ENCODE measurements at regions of chr11 and their contacts with region 1.

Region 1: DNA sequence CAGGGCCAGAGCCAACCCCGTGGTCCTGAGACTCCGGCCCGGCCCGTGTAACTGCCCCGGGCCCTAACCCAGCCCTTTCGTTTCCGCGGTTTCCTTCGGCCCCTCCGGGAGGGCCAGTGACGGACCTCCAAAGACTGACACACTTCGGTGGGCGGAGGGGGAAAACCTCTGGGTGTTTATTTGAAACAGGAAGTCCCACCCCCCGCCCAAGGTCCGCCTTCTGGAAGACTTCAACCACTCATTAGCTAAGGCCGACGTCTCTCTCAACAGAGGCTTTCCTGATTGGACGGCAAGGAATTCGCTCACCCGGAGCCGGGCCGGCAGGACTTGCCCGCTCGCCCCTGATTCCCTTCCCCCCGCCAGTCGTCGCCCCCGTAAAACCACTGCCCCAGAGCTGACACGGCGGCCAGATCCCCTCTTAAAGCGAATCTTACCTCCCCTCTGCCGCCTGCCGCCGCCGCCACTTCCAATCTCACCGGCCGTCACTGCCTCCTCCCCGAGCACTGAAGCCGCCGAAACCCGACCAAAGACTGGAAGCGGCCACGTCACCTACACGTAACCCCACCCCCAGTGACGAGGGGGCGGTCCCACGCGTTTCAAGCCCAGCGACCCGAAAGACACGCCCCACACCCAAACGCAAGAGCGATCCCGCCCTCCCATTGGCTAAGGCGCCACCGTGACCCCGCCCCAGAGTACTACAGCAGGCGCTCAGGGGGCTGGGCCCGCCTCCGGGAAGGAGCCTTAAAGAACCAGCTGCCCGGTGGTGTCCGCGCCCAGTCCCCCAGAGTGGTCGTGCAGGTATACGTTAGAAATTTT is at the start of gene STX5:
- DNase-seq: peak; percentile 91
- ATAC-seq: peak; percentile 94
- H3K4me3 ChIP-seq: peak within 1 kb of the TSS; percentile 89 to 95
- H3K27ac ChIP-seq: peak within 1 kb of the TSS; percentile 91
- H3K4me1 ChIP-seq: peaks cover 18% of the 10 kb centered on the region
- H3K27me3 ChIP-seq: no peaks in the 10 kb centered on the region
- CTCF ChIP-seq: no peak
- total RNA-seq, gene STX5: 31.4 TPM

Region 2: DNA sequence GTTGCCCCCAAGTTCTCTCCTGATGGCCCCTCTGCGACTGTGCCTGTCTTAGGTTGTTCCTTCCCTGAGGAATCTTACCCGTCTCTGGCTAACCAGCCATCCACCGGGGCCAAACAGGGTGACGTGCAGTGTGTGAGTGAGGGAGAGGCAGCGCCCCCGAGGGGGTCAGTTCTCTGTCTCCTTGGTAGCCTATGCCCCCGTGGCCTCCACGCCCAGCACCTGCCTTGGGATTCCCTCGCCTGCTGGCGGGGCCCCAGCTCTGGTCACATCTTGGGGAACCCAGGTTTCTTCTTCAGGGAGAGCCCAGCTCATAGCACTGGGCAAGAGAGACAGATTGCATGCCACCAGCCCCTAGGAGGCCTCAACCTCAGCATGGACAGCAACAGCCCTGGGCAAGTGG is 32.2 kb before region 1 on chr11:
- CTCF ChIA-PET with region 1: no interaction called
- POLR2A ChIA-PET with region 1: no interaction called
- in situ Hi-C with region 1: no loop called
- intact Hi-C with region 1: no loop called
- DNase-seq: no peak
- ATAC-seq: no peak
- H3K4me3 ChIP-seq: no peak overlapping the region
- H3K27ac ChIP-seq: no peak overlapping the region
- H3K4me1 ChIP-seq: peaks cover 5% of the 10 kb centered on the region
- H3K27me3 ChIP-seq: no peaks in the 10 kb centered on the region
- CTCF ChIP-seq: no peak

Region 3: DNA sequence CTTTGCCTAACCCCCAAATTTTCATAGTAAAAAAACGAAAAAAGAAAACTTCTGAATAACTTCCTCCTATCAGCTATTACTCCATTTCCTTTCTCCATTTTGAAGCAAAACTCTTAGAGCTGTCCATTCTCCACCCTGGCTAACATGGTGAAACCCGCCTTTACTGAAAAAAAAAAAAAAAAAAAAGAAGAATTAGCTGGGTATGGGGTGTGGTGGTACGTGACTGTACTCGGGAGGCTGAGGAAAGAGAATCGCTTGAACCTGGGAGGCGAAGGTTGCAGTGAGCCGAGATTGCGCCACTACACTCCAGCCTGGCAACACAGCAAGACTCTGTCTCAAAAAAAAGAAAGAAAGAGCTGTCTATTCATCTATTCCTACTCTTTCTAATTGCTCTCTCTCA is 15.2 kb before region 1 on chr11:
- CTCF ChIA-PET with region 1: no interaction called
- POLR2A ChIA-PET with region 1: interaction called, 11 read pairs
- in situ Hi-C with region 1: no loop called
- intact Hi-C with region 1: no loop called
- DNase-seq: no peak
- ATAC-seq: no peak
- H3K4me3 ChIP-seq: no peak overlapping the region
- H3K27ac ChIP-seq: no peak overlapping the region
- H3K4me1 ChIP-seq: no peaks in the 10 kb centered on the region
- H3K27me3 ChIP-seq: no peaks in the 10 kb centered on the region
- CTCF ChIP-seq: no peak

Region 4: GRCh38 chr11:62855571-62856332 is 24.0 kb after region 1 on chr11:
- CTCF ChIA-PET with region 1: no interaction called
- POLR2A ChIA-PET with region 1: interaction called, 23 read pairs
- in situ Hi-C with region 1: no loop called
- intact Hi-C with region 1: no loop called
- DNase-seq: peak; percentile 92
- ATAC-seq: peak; percentile 93
- H3K4me3 ChIP-seq: peak overlapping the region; percentile 71 to 99
- H3K27ac ChIP-seq: peak overlapping the region; percentile 99
- H3K4me1 ChIP-seq: peaks cover 40% of the 10 kb centered on the region
- H3K27me3 ChIP-seq: no peaks in the 10 kb centered on the region
- CTCF ChIP-seq: no peak

Region 5: DNA sequence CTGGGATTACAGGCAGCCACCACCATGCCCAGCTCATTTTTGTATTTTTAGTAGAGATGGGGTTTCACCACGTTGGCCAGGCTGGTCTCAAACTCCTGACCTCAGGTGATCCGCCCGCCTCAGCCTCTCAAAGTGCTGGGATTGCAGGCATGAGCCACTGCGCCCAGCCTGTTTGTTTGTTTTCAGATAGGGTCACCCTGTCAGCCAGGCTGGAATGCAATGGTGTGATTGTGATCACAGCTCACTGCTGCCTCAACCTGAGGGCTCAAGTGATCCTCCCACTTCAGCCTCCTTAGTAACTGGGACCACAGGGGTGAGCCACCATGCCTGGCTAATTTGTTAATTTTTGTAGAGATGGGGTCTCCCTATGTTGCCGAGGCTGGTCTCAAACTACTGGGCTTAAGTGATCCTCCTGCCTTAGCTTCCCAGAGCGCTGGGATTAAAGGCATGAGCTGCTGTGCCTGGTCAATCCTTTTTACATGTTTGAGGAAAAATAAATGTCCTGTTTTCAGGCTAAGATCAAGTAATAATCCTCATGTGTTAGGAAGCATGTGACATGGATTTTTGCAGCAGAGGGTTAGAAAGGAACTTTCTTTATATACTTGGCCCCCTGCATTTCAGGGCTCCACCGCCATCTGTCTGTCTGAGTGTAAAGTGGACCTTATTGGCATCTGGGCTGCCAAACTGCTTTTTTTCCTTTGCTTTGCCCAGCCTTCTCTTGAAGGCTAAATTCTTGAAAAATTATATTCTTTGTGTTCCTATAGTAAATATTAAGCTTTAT is 44.2 kb after region 1 on chr11:
- CTCF ChIA-PET with region 1: no interaction called
- POLR2A ChIA-PET with region 1: interaction called, 11 read pairs
- in situ Hi-C with region 1: no loop called
- intact Hi-C with region 1: no loop called
- DNase-seq: no peak
- ATAC-seq: no peak
- H3K4me3 ChIP-seq: no peak overlapping the region
- H3K27ac ChIP-seq: no peak overlapping the region
- H3K4me1 ChIP-seq: peaks cover 13% of the 10 kb centered on the region
- H3K27me3 ChIP-seq: no peaks in the 10 kb centered on the region
- CTCF ChIP-seq: no peak

Region 6: GRCh38 chr11:62889484-62890437 is 58.0 kb after region 1 on chr11:
- CTCF ChIA-PET with region 1: no interaction called
- POLR2A ChIA-PET with region 1: no interaction called
- in situ Hi-C with region 1: no loop called
- intact Hi-C with region 1: no loop called
- DNase-seq: peak; percentile 57
- ATAC-seq: peak; percentile 67
- H3K4me3 ChIP-seq: no peak overlapping the region
- H3K27ac ChIP-seq: peak overlapping the region; percentile 60
- H3K4me1 ChIP-seq: peaks cover 30% of the 10 kb centered on the region
- H3K27me3 ChIP-seq: no peaks in the 10 kb centered on the region
- CTCF ChIP-seq: no peak

Region 7: DNA sequence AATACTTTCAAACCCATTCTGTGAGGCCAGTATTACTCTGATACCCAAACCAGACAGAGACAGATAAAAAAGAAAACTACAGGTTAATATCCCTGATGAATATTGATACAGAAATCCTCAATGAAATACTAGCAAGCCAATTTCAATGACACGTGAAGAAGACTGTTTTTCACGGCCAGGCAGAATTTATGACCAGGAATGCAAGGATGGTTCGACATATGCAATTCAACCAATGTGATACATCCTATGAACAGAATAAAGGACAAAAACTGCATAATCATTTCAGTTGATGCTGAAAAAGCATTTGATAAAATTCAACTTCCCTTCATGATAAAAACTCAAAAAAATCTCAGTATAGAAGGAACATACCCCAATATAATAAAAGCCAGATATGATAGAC is 267.8 kb after region 1 on chr11:
- CTCF ChIA-PET with region 1: no interaction called
- POLR2A ChIA-PET with region 1: no interaction called
- in situ Hi-C with region 1: no loop called
- intact Hi-C with region 1: no loop called
- DNase-seq: no peak
- ATAC-seq: no peak
- H3K4me3 ChIP-seq: no peak overlapping the region
- H3K27ac ChIP-seq: no peak overlapping the region
- H3K4me1 ChIP-seq: no peaks in the 10 kb centered on the region
- H3K27me3 ChIP-seq: no peaks in the 10 kb centered on the region
- CTCF ChIP-seq: no peak

Measured in Panc1 (cell line).